H1 (cell line): ENCODE measurements at regions of chr1 and their contacts with region 1.

Region 1: GRCh38 chr1:20717452-20718342 is at the start of gene KIF17:
- DNase-seq: peak in 1 of 2 experiments; percentile 93
- H3K4me3 ChIP-seq: peak within 1 kb of the TSS; percentile 28 to 69 (median 56)
- H3K27ac ChIP-seq: no peak within 1 kb of the TSS; the same call in 1 of the 2 replicates
- H3K4me1 ChIP-seq: peaks cover 0 to 7% (median under 1%) of the 10 kb centered on the region in 4 experiments; a peak in 5 of 7 replicates
- H3K27me3 ChIP-seq: peaks cover 0 to 22% (median 10%) of the 10 kb centered on the region in 4 experiments; a peak in 6 of 7 replicates
- CTCF ChIP-seq: no peak
- EP300 ChIP-seq: no peak
- POLR2A ChIP-seq: no peak
- RAD21 ChIP-seq: no peak
- total RNA-seq, gene KIF17: 9.9 and 10.4 TPM in 2 replicates

Region 2: DNA sequence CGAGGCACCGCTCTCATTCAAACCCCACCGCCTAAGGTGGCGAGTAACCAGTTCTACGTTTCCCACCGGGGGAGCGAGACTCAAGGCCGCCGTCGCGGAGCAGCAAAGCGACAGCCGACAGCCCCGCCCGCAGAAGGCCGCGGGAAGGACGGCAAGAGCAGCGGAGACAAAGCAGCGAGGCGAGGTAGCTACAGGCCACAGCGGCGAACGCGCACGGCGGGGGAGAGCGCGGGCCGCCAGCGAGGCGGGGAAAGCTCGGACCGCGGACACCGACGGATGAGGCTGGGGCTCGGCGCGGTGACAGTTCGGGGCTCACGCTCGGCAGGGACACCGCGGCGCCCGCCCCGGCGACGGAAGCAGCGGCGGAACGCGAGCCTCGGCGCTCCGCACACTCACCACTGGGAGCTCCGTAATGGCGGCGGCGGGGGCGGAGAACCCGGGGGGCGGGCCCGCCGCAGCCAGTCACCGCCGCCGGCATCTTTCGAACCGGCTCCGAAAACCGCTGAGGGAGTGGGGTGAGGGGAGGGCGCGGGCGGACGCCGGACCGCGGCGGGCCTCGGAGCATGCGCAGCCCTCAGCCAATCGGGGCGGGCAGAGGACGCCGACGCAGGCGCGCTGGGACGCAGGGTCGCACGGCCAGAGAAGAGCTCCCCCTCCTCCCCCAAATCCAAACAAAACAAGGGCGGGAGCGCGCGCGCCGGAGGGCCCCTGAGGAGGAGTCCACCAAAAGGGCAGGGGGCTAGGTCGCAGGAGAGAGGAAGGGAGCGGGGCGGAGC is 68.7 kb after region 1 on chr1:
- CTCF ChIA-PET with region 1: no interaction called
- POLR2A ChIA-PET with region 1: interaction called, 15 read pairs
- DNase-seq: peak; percentile 92 to 96
- H3K4me3 ChIP-seq: peak overlapping the region; percentile 82 to 99 (median 92)
- H3K27ac ChIP-seq: peak overlapping the region; percentile 95
- H3K4me1 ChIP-seq: peaks cover 0 to 6% (median 6%) of the 10 kb centered on the region in 4 experiments; a peak in 3 of 7 replicates
- H3K27me3 ChIP-seq: no peaks in the 10 kb centered on the region
- CTCF ChIP-seq: no peak
- EP300 ChIP-seq: no peak
- POLR2A ChIP-seq: peak; percentile 63 to 82; a peak in 2 of 3 replicates
- RAD21 ChIP-seq: no peak